ENCODE measurements at regions of chr14 and their contacts with region 1.

Region 1: DNA sequence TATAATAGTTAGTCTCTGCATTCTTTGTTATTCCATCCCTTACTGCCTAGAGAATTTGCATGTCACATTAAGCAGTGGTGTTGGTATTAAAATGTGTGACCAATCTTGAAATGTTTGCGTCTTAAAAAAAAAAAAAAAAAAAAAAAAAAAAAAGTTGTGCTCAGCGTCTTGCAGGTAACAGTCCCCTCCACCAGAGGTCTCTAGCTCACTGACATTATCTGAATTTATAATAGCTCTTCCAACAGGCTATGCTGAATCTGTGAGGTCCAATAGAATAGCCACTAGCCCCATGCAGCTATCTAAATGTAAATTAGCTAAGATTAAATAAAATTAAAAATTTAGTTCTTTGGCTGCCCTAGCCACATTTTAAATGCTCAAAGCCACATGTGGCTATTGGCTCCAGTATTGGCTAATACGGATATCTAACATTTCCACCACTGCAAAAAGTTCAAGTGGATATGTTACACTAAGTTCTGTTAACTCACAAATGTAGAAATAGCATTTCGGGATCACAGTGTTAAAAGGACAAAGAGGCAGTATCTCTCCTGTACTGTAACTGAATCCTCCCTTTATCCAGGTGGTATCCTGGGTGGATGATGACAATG is 28.7 kb downstream of the NKX2-8 start:
- DNase-seq: no peak
- H3K4me3 ChIP-seq: no peak overlapping the region
- H3K27ac ChIP-seq: no peak overlapping the region
- H3K4me1 ChIP-seq: peaks cover 0 to 6% (median 4%) of the 10 kb centered on the region in 4 experiments; a peak in 2 of 7 replicates
- H3K27me3 ChIP-seq: no peaks in the 10 kb centered on the region; a peak in 1 of 7 replicates
- CTCF ChIP-seq: peak in 2 of 3 experiments; percentile 62 to 64; a peak in 2 of 4 replicates
- EP300 ChIP-seq: no peak
- POLR2A ChIP-seq: no peak
- RAD21 ChIP-seq: peak; percentile 69 to 70

Region 2: DNA sequence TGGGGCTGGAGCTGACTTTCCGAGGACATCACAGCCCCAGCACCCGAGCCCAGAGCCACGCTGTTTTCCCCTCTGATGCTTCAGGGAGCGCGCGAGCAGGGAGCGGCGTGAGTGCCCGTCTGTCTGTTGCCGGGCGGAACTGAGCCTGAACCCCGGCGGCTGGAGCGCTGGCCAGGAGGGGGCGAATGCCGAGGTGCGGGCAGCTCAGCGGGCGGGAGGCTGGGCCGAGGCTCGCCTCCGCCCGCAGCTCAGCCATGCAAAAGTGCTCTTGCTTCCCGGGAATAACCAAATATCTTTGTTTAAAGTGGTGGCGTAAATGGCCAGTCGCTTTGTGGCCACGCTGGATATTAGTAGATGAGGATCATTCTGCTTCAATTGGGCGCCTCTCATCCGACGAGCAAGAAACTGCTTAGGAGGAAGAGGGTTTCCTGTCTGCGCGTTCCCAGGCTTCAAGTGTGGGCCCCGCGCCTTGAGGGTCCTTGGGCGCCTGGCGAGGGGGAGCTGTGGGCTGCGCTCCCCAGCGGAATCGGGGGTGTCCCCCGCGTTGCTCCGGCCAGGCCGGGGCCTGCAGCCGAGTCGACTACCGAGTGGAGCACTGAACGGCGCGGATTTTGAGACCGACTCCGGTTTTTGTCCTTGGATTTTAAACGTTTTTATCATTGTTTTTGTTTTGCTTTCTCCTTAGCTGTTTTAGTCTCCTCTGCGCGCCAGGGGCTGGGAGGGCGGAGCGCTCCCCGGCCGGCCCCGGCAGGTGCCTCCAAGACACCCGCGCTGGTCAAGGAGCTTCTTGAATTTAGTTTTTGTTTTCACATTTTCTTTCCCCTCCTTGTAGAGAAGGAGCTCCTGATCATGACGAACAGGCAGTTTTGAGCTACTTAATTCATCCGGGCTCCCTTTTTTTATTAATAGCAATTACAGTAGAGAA is 32.9 kb before region 1 on chr14:
- CTCF ChIA-PET with region 1: interaction called, 230 read pairs
- POLR2A ChIA-PET with region 1: interaction called, 4 read pairs
- DNase-seq: peak in 1 of 2 experiments; percentile 80
- H3K4me3 ChIP-seq: peak overlapping the region in 3 of 4 experiments; percentile 11 to 47 (median 23); a peak in 4 of 8 replicates
- H3K27ac ChIP-seq: no peak overlapping the region
- H3K4me1 ChIP-seq: peaks cover 0 to 25% (median 14%) of the 10 kb centered on the region in 4 experiments; a peak in 6 of 7 replicates
- H3K27me3 ChIP-seq: peaks cover 94 to 100% (median 98%) of the 10 kb centered on the region in 4 experiments
- CTCF ChIP-seq: peak in 2 of 3 experiments; percentile 39 to 46; a peak in 3 of 4 replicates
- EP300 ChIP-seq: no peak
- POLR2A ChIP-seq: no peak
- RAD21 ChIP-seq: peak; percentile 12 to 21; a peak in 2 of 4 replicates

Region 3: GRCh38 chr14:36570065-36570464 is 16.3 kb after region 1 on chr14:
- CTCF ChIA-PET with region 1: interaction called, 13 read pairs
- POLR2A ChIA-PET with region 1: no interaction called
- DNase-seq: no peak
- H3K4me3 ChIP-seq: no peak overlapping the region
- H3K27ac ChIP-seq: no peak overlapping the region
- H3K4me1 ChIP-seq: no peaks in the 10 kb centered on the region
- H3K27me3 ChIP-seq: peaks cover 5 to 15% (median 8%) of the 10 kb centered on the region in 4 experiments
- CTCF ChIP-seq: no peak
- EP300 ChIP-seq: no peak
- POLR2A ChIP-seq: no peak
- RAD21 ChIP-seq: no peak

Region 4: DNA sequence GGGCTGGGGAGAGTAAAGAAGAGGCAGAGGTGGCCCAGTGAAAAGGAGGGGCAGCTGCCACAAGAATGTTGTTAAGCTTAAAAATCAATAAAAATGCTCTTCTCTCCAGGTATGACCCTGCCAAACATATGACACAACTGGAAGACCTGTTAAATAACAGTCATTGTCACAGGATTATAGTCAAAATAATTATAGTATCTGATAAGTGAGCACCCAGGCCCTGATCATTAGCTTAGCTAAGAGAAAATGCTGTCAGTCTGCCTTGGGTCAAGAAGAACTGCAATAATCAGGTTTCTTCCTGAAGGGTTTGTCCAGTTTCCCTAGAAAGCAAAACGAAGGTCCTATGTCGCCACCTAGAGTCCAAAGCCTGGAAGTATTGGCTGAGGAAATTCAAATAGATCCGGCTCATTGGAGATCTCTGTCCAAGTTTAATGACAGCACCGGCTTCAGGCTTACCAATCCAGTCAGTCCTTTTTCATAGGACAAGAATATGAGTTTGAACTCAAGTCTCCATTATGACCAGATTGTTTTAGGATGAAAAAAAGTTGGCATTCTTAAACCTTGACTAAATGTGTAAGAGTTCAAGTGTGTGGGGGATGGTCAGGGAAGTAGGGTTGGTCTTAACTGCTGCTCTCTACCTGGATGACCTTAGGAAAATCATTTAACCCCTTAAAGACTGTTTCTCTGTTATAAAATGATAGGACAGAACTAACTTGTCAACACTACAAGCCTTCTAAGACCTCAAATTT is 51.2 kb after region 1 on chr14:
- CTCF ChIA-PET with region 1: interaction called, 183 read pairs
- POLR2A ChIA-PET with region 1: no interaction called
- DNase-seq: peak in 1 of 2 experiments; percentile 70
- H3K4me3 ChIP-seq: peak overlapping the region in 1 of 4 experiments; percentile 40; a peak in 2 of 8 replicates
- H3K27ac ChIP-seq: no peak overlapping the region
- H3K4me1 ChIP-seq: peaks cover 2 to 12% (median 8%) of the 10 kb centered on the region in 4 experiments; a peak in 5 of 7 replicates
- H3K27me3 ChIP-seq: no peaks in the 10 kb centered on the region
- CTCF ChIP-seq: peak in 2 of 3 experiments; percentile 78 to 88; a peak in 3 of 4 replicates
- EP300 ChIP-seq: no peak
- POLR2A ChIP-seq: no peak
- RAD21 ChIP-seq: peak; percentile 90 to 93

Region 5: GRCh38 chr14:36682338-36682737 is 128.6 kb after region 1 on chr14:
- CTCF ChIA-PET with region 1: no interaction called
- POLR2A ChIA-PET with region 1: no interaction called
- DNase-seq: no peak
- H3K4me3 ChIP-seq: no peak overlapping the region
- H3K27ac ChIP-seq: no peak overlapping the region
- H3K4me1 ChIP-seq: peaks cover 0 to 12% (median 0%) of the 10 kb centered on the region in 4 experiments; a peak in 3 of 7 replicates
- H3K27me3 ChIP-seq: no peaks in the 10 kb centered on the region
- CTCF ChIP-seq: no peak
- EP300 ChIP-seq: no peak
- POLR2A ChIP-seq: no peak
- RAD21 ChIP-seq: no peak

Region 6: DNA sequence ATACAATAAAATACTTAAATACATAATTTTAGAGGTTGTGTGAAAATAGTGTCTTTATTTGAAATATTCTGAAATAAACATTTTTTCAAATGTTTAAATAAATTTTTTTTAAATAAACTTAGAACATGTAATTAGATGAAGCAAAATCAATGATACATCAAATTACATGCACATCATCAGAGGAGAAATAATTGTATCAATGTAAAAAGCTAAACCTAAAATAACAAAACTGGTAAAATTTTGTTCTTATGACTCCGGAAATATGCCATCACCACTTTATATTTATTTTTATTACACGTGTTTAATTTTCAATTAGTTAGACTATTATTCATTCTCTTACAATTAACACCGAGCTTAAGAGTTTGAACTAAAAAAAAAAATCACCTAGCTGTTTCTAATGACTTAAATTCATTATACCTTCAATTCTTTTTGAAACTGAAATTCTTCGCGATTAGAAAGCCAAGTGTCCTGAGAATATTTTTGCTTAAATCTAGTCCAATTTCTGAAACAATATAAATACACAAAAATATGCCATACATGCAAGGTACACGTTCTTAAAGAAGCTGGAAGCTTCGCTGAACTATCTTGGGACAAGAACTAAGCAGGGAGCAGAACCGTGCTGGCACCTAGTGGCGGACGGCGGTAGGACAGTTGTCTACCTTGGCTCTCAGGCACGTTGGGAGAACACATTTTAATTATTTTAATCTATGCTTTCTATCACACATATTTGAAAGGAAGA is 388.2 kb after region 1 on chr14:
- CTCF ChIA-PET with region 1: interaction called, 17 read pairs
- POLR2A ChIA-PET with region 1: no interaction called
- DNase-seq: peak; percentile 27 to 92
- H3K4me3 ChIP-seq: no peak overlapping the region
- H3K27ac ChIP-seq: no peak overlapping the region
- H3K4me1 ChIP-seq: no peaks in the 10 kb centered on the region
- H3K27me3 ChIP-seq: no peaks in the 10 kb centered on the region
- CTCF ChIP-seq: peak; percentile 86 to 93 (median 91)
- EP300 ChIP-seq: no peak
- POLR2A ChIP-seq: no peak
- RAD21 ChIP-seq: peak; percentile 96 to 98

Region 7: GRCh38 chr14:37195327-37195726 is 641.6 kb after region 1 on chr14:
- CTCF ChIA-PET with region 1: no interaction called
- POLR2A ChIA-PET with region 1: no interaction called
- DNase-seq: no peak
- H3K4me3 ChIP-seq: no peak overlapping the region
- H3K27ac ChIP-seq: no peak overlapping the region
- H3K4me1 ChIP-seq: no peaks in the 10 kb centered on the region; a peak in 2 of 7 replicates
- H3K27me3 ChIP-seq: no peaks in the 10 kb centered on the region
- CTCF ChIP-seq: no peak
- EP300 ChIP-seq: no peak
- POLR2A ChIP-seq: no peak
- RAD21 ChIP-seq: no peak

Measured in H1 (cell line).